Caco-2 (cell line): ENCODE measurements at regions of chr10 and their contacts with region 1.

Region 1: DNA sequence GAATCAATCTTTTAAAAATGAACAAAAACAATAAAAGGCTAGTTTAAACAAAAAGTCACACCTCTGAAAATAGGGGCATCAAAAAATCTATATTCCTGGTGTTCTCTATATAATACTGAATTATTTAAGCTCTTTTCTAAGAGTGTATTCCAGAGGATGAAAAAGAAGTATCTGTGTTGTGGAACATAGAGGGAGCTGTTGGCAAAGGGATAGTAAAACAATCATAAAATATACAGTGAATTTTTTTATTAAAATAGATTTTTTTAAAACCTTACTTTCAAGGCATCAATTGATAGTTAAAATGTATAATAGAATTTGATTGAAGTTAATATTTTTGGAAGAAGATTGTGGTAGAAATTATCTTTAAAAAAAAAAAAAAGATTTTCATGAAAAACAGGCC is 1409.1 kb upstream of the CELF2 start:
- DNase-seq: no peak
- H3K4me3 ChIP-seq: no peak overlapping the region
- H3K4me3 Mint-ChIP-seq: no peak overlapping the region
- H3K27ac Mint-ChIP-seq: no peak overlapping the region
- H3K4me1 ChIP-seq: no peaks in the 10 kb centered on the region
- H3K4me1 Mint-ChIP-seq: no peaks in the 10 kb centered on the region
- H3K27me3 ChIP-seq: no peaks in the 10 kb centered on the region
- H3K27me3 Mint-ChIP-seq: no peaks in the 10 kb centered on the region
- CTCF ChIP-seq: peak in 1 of 2 experiments; percentile 40

Region 2: GRCh38 chr10:8652395-8652794 is 956.2 kb before region 1 on chr10:
- CTCF ChIA-PET with region 1: no interaction called
- POLR2A ChIA-PET with region 1: no interaction called
- intact Hi-C with region 1: no loop called
- DNase-seq: no peak
- H3K4me3 ChIP-seq: no peak overlapping the region
- H3K4me3 Mint-ChIP-seq: no peak overlapping the region
- H3K27ac Mint-ChIP-seq: no peak overlapping the region
- H3K4me1 ChIP-seq: no peaks in the 10 kb centered on the region
- H3K4me1 Mint-ChIP-seq: no peaks in the 10 kb centered on the region
- H3K27me3 ChIP-seq: no peaks in the 10 kb centered on the region
- H3K27me3 Mint-ChIP-seq: peaks cover 2% of the 10 kb centered on the region
- CTCF ChIP-seq: no peak

Region 3: GRCh38 chr10:9743639-9744038 is 135.0 kb after region 1 on chr10:
- CTCF ChIA-PET with region 1: no interaction called
- POLR2A ChIA-PET with region 1: no interaction called
- intact Hi-C with region 1: loop called (anchors 2 kb)
- DNase-seq: no peak
- H3K4me3 ChIP-seq: no peak overlapping the region
- H3K4me3 Mint-ChIP-seq: no peak overlapping the region
- H3K27ac Mint-ChIP-seq: no peak overlapping the region
- H3K4me1 ChIP-seq: no peaks in the 10 kb centered on the region
- H3K4me1 Mint-ChIP-seq: no peaks in the 10 kb centered on the region
- H3K27me3 ChIP-seq: no peaks in the 10 kb centered on the region
- H3K27me3 Mint-ChIP-seq: peaks cover 3% of the 10 kb centered on the region
- CTCF ChIP-seq: no peak

Region 4: DNA sequence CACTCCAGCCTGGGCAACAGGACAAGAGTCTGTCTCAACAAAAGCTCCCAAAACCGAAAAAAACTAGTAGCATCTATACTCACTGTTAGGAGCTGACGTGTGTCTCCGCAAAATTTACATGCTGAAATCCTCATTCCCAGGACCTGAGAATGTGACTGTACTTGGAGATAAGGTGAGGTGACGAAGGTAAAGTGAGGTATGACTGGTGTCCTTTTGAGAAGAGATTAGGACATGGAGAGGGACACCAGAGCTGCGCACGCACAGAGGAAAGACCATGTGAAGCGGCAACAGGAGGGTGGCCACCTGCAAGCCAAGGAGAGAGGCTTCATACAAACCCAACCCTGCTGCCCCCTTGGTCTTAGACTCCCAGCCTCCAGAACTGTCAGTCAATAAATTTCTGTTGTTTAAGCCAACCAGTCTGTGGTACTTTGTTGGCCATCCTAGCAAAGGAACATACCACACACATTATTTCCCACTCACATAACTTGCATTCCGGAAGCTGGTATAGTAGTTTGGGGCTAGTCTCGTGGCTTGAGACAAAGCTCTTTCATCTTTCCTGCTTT is 255.0 kb after region 1 on chr10:
- CTCF ChIA-PET with region 1: interaction called, 9 read pairs
- POLR2A ChIA-PET with region 1: no interaction called
- intact Hi-C with region 1: loop called (anchors 1 kb)
- DNase-seq: no peak
- H3K4me3 ChIP-seq: no peak overlapping the region
- H3K4me3 Mint-ChIP-seq: no peak overlapping the region
- H3K27ac Mint-ChIP-seq: no peak overlapping the region
- H3K4me1 ChIP-seq: no peaks in the 10 kb centered on the region
- H3K4me1 Mint-ChIP-seq: no peaks in the 10 kb centered on the region
- H3K27me3 ChIP-seq: no peaks in the 10 kb centered on the region
- H3K27me3 Mint-ChIP-seq: no peaks in the 10 kb centered on the region
- CTCF ChIP-seq: no peak

Region 5: DNA sequence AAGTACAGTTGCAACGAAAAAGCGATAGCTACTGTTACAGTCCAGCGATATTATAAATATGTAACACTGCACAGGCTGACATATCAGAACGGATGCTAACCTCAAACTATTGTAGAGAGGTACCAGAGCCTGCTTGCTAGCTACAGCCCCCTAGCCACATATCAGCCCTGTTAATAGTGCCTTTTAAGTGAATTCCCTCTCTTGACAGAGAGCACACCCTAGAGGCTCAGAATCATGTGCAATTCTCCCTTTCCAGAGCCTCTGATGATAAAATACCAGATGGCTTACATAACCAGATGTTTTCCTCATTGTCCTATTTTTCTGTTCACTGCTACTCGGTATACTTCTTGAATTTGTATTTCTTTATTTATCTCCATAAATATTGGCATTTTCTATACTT is 448.4 kb after region 1 on chr10:
- CTCF ChIA-PET with region 1: no interaction called
- POLR2A ChIA-PET with region 1: no interaction called
- intact Hi-C with region 1: loop called (anchors 2 kb)
- DNase-seq: no peak
- H3K4me3 ChIP-seq: no peak overlapping the region
- H3K4me3 Mint-ChIP-seq: no peak overlapping the region
- H3K27ac Mint-ChIP-seq: no peak overlapping the region
- H3K4me1 ChIP-seq: no peaks in the 10 kb centered on the region
- H3K4me1 Mint-ChIP-seq: no peaks in the 10 kb centered on the region
- H3K27me3 ChIP-seq: no peaks in the 10 kb centered on the region
- H3K27me3 Mint-ChIP-seq: peaks cover 5% of the 10 kb centered on the region
- CTCF ChIP-seq: no peak

Region 6: GRCh38 chr10:10685566-10685965 is 1077.0 kb after region 1 on chr10:
- CTCF ChIA-PET with region 1: no interaction called
- POLR2A ChIA-PET with region 1: no interaction called
- intact Hi-C with region 1: loop called (anchors 10 kb)
- DNase-seq: no peak
- H3K4me3 ChIP-seq: no peak overlapping the region
- H3K4me3 Mint-ChIP-seq: no peak overlapping the region
- H3K27ac Mint-ChIP-seq: no peak overlapping the region
- H3K4me1 ChIP-seq: peaks cover 12% of the 10 kb centered on the region
- H3K4me1 Mint-ChIP-seq: peaks cover under 1% of the 10 kb centered on the region
- H3K27me3 ChIP-seq: no peaks in the 10 kb centered on the region
- H3K27me3 Mint-ChIP-seq: peaks cover 15% of the 10 kb centered on the region
- CTCF ChIP-seq: no peak

Region 7: DNA sequence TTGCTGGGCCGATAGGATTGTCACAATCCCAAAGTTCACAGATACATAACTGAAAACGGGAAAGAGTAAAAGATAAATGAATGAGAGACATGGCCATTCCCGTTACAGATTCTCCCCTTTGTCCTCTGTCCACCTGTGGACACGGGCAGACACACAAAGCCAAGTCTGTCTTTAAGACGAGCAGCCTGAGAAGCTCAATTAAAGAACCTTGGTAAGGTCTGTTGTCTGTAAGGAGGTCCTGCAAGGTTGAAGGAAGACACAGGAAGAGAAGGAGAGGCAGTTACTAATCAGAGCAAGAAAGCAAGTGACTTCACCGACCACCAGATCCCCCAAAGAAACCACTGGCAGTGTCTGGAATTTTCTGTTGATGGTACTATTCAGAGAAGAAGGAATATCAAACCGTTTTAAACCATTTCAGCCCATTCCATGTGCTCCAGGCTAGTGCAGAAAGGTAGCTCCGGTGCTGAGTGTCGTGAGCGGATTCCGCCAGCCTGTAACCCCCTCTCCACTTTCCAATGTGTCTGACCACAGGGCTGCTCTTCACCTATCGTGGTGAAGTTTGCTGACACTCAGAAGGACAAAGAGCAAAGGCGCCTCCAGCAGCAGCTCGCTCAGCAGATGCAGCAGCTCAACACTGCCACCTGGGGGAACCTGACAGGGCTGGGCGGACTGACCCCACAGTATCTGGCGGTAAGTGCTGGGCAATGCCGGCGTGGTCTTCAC is 1661.7 kb after region 1 on chr10:
- CTCF ChIA-PET with region 1: no interaction called
- POLR2A ChIA-PET with region 1: no interaction called
- intact Hi-C with region 1: loop called (anchors 2 kb)
- DNase-seq: peak; percentile 88 to 91
- H3K4me3 ChIP-seq: no peak overlapping the region
- H3K4me3 Mint-ChIP-seq: peak overlapping the region; percentile 17
- H3K27ac Mint-ChIP-seq: no peak overlapping the region
- H3K4me1 ChIP-seq: peaks cover 9% of the 10 kb centered on the region
- H3K4me1 Mint-ChIP-seq: peaks cover 7% of the 10 kb centered on the region
- H3K27me3 ChIP-seq: peaks cover 5% of the 10 kb centered on the region; the same call in 1 of the 2 replicates
- H3K27me3 Mint-ChIP-seq: peaks cover 40% of the 10 kb centered on the region
- CTCF ChIP-seq: peak; percentile 96 to 99